H1 (cell line): ENCODE measurements at regions of chr17 and their contacts with region 1.

Region 1: GRCh38 chr17:40531051-40531991 is 29.9 kb upstream of the TNS4 start:
- DNase-seq: no peak
- H3K4me3 ChIP-seq: no peak overlapping the region
- H3K27ac ChIP-seq: no peak overlapping the region
- H3K4me1 ChIP-seq: peaks cover 0 to 8% (median 3%) of the 10 kb centered on the region in 4 experiments; a peak in 1 of 7 replicates
- H3K27me3 ChIP-seq: no peaks in the 10 kb centered on the region
- CTCF ChIP-seq: no peak
- EP300 ChIP-seq: no peak
- POLR2A ChIP-seq: no peak
- RAD21 ChIP-seq: no peak

Region 2: GRCh38 chr17:40362696-40363110 is 168.6 kb before region 1 on chr17:
- CTCF ChIA-PET with region 1: interaction called, 34 read pairs
- POLR2A ChIA-PET with region 1: interaction called, 5 read pairs
- DNase-seq: peak in 1 of 2 experiments; percentile 94
- H3K4me3 ChIP-seq: peak overlapping the region; percentile 21 to 65 (median 42); a peak in 7 of 8 replicates
- H3K27ac ChIP-seq: no peak overlapping the region
- H3K4me1 ChIP-seq: peaks cover 6 to 34% (median 23%) of the 10 kb centered on the region in 4 experiments
- H3K27me3 ChIP-seq: peaks cover 8 to 27% (median 24%) of the 10 kb centered on the region in 4 experiments
- CTCF ChIP-seq: peak; percentile 81 to 96 (median 86)
- EP300 ChIP-seq: no peak
- POLR2A ChIP-seq: no peak
- RAD21 ChIP-seq: peak; percentile 73 to 78

Region 3: DNA sequence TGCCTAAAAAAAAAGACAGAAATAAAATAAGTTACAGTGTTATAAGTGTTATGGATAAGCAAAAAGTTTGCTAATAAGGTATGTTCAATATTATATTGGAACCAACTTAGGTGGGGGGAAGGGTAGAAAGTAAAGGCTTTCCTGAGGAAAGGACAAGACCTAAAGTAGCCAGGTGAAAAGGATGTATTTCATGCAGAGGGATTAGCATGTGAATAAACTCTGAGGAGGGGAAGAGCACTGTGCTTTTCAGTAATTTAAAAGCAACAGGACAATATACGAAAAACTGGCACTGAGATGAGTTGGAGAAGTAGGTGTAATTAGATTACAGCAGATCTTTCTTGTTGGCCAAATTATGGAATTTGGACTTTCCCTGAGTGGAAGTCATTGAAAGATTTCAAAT is 121.2 kb before region 1 on chr17:
- CTCF ChIA-PET with region 1: interaction called, 27 read pairs
- POLR2A ChIA-PET with region 1: interaction called, 6 read pairs
- DNase-seq: no peak
- H3K4me3 ChIP-seq: peak overlapping the region in 1 of 4 experiments; percentile 38; a peak in 2 of 8 replicates
- H3K27ac ChIP-seq: peak overlapping the region; percentile 33; the same call in 1 of the 2 replicates
- H3K4me1 ChIP-seq: peaks cover 0 to 12% (median 1%) of the 10 kb centered on the region in 4 experiments; a peak in 3 of 7 replicates
- H3K27me3 ChIP-seq: no peaks in the 10 kb centered on the region
- CTCF ChIP-seq: no peak
- EP300 ChIP-seq: no peak
- POLR2A ChIP-seq: no peak
- RAD21 ChIP-seq: no peak

Region 4: DNA sequence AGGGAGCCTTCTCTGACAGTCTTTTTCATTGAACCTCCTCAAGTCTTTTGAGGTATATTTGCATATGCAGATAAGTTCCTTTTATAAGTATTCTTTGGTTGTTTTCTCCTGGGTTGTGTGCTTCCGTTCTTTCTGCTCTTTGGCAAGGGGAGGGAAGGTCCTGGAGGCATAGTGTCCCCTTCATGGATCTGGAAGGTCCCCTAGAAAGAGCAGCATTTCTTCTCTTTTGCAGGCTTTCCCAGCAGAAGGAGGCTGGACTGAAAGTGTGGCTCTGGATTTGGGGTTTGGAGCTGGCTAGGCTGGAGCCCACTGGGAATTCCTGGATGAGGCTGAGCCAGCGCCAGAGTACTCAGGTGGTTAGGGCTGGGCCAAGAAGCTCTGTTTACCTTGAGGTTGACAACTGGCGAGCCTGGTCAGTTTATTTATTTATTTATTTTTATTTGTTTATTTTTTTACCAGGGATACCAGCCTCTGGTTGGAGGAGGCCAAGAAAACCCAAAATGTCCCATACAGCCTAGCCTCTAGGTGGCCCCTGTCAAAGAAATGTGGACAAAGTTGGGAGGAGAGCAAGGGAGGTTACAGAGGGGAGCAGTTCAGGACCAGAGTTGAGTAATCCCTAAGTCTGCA is 108.2 kb before region 1 on chr17:
- CTCF ChIA-PET with region 1: interaction called, 38 read pairs
- POLR2A ChIA-PET with region 1: interaction called, 6 read pairs
- DNase-seq: peak in 1 of 2 experiments; percentile 73
- H3K4me3 ChIP-seq: peak overlapping the region in 1 of 4 experiments; percentile 11; a peak in 1 of 8 replicates
- H3K27ac ChIP-seq: no peak overlapping the region
- H3K4me1 ChIP-seq: peaks cover 4 to 21% (median 10%) of the 10 kb centered on the region in 4 experiments
- H3K27me3 ChIP-seq: no peaks in the 10 kb centered on the region
- CTCF ChIP-seq: peak; percentile 1 to 16 (median 4); a peak in 3 of 4 replicates
- EP300 ChIP-seq: no peak; a peak in 1 of 3 replicates
- POLR2A ChIP-seq: no peak
- RAD21 ChIP-seq: no peak

Region 5: GRCh38 chr17:40499551-40500174 is 31.7 kb before region 1 on chr17:
- CTCF ChIA-PET with region 1: interaction called, 25 read pairs
- POLR2A ChIA-PET with region 1: no interaction called
- DNase-seq: peak in 1 of 2 experiments; percentile 89
- H3K4me3 ChIP-seq: peak overlapping the region in 1 of 4 experiments; percentile 10; a peak in 2 of 8 replicates
- H3K27ac ChIP-seq: no peak overlapping the region
- H3K4me1 ChIP-seq: peaks cover 5 to 18% (median 7%) of the 10 kb centered on the region in 4 experiments; a peak in 6 of 7 replicates
- H3K27me3 ChIP-seq: no peaks in the 10 kb centered on the region
- CTCF ChIP-seq: peak in 1 of 3 experiments; percentile 21; a peak in 2 of 4 replicates
- EP300 ChIP-seq: no peak
- POLR2A ChIP-seq: no peak
- RAD21 ChIP-seq: no peak

Region 6: DNA sequence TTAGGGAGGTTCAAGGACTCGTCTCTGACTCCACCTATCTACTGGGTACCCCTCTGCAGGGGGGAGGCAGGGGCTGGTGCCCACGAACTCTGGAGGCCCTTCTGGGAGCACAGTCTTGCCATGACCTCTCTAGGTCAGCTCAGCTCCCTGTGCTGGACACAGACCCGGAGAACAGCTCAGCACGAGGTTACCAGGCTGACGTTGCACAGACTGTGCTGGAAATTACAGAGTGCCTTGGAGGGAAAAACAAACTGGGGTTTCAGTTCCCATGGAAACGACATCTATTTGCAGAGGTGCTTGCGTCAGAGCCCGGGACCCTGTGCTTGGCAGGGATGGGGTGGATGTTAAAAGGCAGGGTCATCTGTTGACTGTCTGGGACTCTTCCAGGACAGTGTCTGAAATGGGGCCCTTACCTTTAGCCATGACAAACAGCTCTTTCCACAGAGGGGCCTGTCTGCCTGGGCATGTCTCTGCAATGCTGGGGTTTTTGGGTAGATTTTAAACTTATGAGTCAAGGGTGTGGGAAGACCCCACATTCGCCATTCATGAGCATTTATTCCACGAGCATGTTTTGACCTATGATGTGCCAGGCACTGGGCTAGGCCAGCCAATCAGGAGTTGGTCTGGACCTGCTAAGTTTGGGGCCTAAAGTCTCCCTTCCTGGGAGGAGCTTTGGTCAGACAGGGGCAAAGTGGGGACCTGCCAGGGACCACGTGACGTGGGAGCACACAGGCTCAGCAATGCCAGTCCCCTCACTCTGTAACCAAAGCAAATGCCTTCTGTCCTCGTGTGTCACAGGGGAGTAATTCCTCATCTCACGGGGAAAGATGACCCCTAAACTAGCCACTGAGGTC is 11.5 kb after region 1 on chr17:
- CTCF ChIA-PET with region 1: interaction called, 80 read pairs
- POLR2A ChIA-PET with region 1: interaction called, 3 read pairs
- DNase-seq: no peak
- H3K4me3 ChIP-seq: no peak overlapping the region
- H3K27ac ChIP-seq: no peak overlapping the region
- H3K4me1 ChIP-seq: peaks cover 2 to 14% (median 6%) of the 10 kb centered on the region in 4 experiments; a peak in 6 of 7 replicates
- H3K27me3 ChIP-seq: no peaks in the 10 kb centered on the region; a peak in 1 of 7 replicates
- CTCF ChIP-seq: no peak
- EP300 ChIP-seq: no peak
- POLR2A ChIP-seq: no peak
- RAD21 ChIP-seq: no peak

Region 7: GRCh38 chr17:40582328-40582901 is 51.1 kb after region 1 on chr17:
- CTCF ChIA-PET with region 1: no interaction called
- POLR2A ChIA-PET with region 1: no interaction called
- DNase-seq: no peak
- H3K4me3 ChIP-seq: no peak overlapping the region
- H3K27ac ChIP-seq: no peak overlapping the region
- H3K4me1 ChIP-seq: no peaks in the 10 kb centered on the region
- H3K27me3 ChIP-seq: no peaks in the 10 kb centered on the region
- CTCF ChIP-seq: no peak
- EP300 ChIP-seq: no peak
- POLR2A ChIP-seq: no peak
- RAD21 ChIP-seq: no peak